ENCODE measurements at regions of chr4 and their contacts with region 1.

Region 1: DNA sequence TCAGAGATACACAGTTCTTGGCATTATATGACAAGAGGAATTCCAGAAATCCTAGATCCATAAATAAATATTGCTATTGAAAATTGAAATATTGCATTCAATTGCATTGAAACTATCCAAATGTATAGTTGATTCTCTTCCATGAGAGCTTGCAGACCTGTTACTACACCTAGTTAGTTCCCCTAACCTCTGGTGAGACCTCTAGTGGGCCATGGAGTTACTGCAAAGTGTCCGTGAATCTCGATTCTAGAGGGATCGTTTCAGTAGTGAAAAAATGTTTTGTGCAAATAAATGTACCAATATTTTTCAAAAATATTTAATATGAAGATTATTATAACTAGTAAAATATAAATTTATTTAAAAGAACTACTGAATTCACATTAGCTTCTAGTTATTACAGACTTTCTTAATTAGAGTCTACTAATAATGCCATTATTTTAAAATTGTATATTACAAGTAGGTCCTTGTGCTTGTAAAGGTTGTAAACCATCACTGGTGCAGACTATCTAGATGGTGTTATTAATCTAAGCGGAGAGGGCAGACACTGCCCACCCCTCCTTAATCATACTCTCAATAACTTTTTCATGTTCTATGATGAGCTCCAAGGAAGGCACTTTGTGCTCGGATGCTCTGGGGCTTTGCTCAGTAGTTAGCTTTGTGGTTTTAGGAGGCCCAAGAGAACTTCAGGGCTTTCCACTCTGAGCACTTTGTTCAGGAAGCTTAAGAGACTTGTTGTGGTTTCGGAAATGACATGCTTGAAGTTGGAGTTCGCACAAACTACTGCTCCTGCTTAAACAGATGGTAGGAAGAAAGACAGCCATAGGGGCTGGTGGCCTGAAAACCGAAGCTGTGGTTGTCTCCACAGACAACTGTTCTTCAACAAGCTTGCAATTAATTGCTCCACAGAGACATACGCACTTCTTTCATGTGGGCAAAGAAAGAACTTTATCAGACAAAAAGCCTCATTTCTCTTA is 42.8 kb downstream of the IL21 start:
- DNase-seq: peak; percentile 84
- ATAC-seq: peak; percentile 64
- H3K4me3 Mint-ChIP-seq: peak overlapping the region; percentile 68
- H3K27ac Mint-ChIP-seq: peak overlapping the region; percentile 96
- H3K4me1 Mint-ChIP-seq: peaks cover 64% of the 10 kb centered on the region
- H3K27me3 Mint-ChIP-seq: no peaks in the 10 kb centered on the region

Region 2: GRCh38 chr4:121950212-121950679 is 627.8 kb before region 1 on chr4:
- CTCF ChIA-PET with region 1: interaction called, 8 read pairs
- POLR2A ChIA-PET with region 1: no interaction called
- intact Hi-C with region 1: loop called (anchors 1 to 2 kb)
- DNase-seq: peak; percentile 94
- ATAC-seq: peak; percentile 87
- H3K4me3 Mint-ChIP-seq: peak overlapping the region; percentile 77
- H3K27ac Mint-ChIP-seq: no peak overlapping the region
- H3K4me1 Mint-ChIP-seq: peaks cover 4% of the 10 kb centered on the region
- H3K27me3 Mint-ChIP-seq: peaks cover 44% of the 10 kb centered on the region

Region 3: DNA sequence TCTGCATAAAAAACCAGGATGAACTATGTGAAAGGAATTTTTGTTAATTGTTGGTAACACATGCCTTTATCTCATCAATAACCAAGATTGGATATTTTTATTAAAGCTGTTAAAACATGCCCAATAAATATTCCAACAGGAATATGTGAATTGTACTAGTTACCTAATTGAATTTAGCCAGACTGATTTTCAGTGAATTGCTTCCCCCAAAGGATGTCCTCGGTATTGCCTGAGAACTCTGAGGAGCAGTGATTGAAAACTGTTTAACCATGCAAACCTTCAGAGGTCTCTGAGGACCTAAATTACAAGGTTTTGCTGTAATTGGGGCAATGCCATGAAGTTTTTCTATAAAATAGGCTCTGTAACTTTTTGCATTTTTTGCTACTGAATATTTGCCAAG is 359.3 kb before region 1 on chr4:
- CTCF ChIA-PET with region 1: no interaction called
- POLR2A ChIA-PET with region 1: no interaction called
- intact Hi-C with region 1: no loop called
- DNase-seq: no peak
- ATAC-seq: no peak
- H3K4me3 Mint-ChIP-seq: no peak overlapping the region
- H3K27ac Mint-ChIP-seq: no peak overlapping the region
- H3K4me1 Mint-ChIP-seq: peaks cover 19% of the 10 kb centered on the region
- H3K27me3 Mint-ChIP-seq: no peaks in the 10 kb centered on the region

Region 4: DNA sequence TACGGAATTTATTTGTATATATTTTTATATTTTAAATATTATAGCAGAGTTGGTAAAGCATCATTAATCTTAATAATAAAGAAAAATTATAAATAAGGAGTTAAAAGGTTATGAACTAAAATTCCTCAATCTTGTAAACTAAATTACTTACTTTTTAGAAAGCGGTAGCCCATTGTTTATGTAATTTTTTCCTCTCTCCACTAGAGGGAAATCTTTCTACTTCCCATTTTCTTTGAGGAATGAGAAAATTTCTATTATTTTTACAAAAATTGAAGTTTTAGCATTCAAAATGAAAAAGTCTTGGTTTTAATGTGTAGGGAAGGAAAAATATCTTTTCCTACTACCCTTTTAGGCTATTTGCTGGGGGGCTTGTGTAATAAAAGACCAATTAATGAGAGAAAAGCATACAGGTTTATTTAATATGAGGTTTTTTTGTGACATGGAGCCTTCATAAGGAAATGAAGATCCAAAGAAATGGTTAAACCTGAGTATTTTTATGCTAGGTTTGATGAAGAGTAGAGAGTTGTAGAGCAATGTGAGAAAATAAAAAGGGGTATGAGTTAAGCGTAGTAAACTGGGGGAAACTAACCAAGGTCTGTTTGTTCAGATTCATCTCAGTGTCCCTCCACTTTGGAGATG is 268.0 kb before region 1 on chr4:
- CTCF ChIA-PET with region 1: interaction called, 42 read pairs
- POLR2A ChIA-PET with region 1: no interaction called
- intact Hi-C with region 1: loop called (anchors 1 kb)
- DNase-seq: no peak
- ATAC-seq: no peak
- H3K4me3 Mint-ChIP-seq: no peak overlapping the region
- H3K27ac Mint-ChIP-seq: peak overlapping the region; percentile 51
- H3K4me1 Mint-ChIP-seq: peaks cover 2% of the 10 kb centered on the region
- H3K27me3 Mint-ChIP-seq: no peaks in the 10 kb centered on the region

Region 5: GRCh38 chr4:122508083-122508482 is 70.0 kb before region 1 on chr4:
- CTCF ChIA-PET with region 1: interaction called, 10 read pairs
- POLR2A ChIA-PET with region 1: interaction called, 8 read pairs
- intact Hi-C with region 1: loop called (anchors 1 to 2 kb)
- DNase-seq: no peak
- ATAC-seq: peak; percentile 77
- H3K4me3 Mint-ChIP-seq: peak overlapping the region; percentile 64
- H3K27ac Mint-ChIP-seq: peak overlapping the region; percentile 92
- H3K4me1 Mint-ChIP-seq: peaks cover 84% of the 10 kb centered on the region
- H3K27me3 Mint-ChIP-seq: peaks cover 2% of the 10 kb centered on the region

Region 6: GRCh38 chr4:122602277-122603142 is 24.4 kb after region 1 on chr4:
- CTCF ChIA-PET with region 1: interaction called, 30 read pairs
- POLR2A ChIA-PET with region 1: no interaction called
- intact Hi-C with region 1: no loop called
- DNase-seq: peak; percentile 40
- ATAC-seq: peak; percentile 89
- H3K4me3 Mint-ChIP-seq: peak overlapping the region; percentile 54
- H3K27ac Mint-ChIP-seq: peak overlapping the region; percentile 59
- H3K4me1 Mint-ChIP-seq: peaks cover 30% of the 10 kb centered on the region
- H3K27me3 Mint-ChIP-seq: peaks cover 3% of the 10 kb centered on the region

Region 7: DNA sequence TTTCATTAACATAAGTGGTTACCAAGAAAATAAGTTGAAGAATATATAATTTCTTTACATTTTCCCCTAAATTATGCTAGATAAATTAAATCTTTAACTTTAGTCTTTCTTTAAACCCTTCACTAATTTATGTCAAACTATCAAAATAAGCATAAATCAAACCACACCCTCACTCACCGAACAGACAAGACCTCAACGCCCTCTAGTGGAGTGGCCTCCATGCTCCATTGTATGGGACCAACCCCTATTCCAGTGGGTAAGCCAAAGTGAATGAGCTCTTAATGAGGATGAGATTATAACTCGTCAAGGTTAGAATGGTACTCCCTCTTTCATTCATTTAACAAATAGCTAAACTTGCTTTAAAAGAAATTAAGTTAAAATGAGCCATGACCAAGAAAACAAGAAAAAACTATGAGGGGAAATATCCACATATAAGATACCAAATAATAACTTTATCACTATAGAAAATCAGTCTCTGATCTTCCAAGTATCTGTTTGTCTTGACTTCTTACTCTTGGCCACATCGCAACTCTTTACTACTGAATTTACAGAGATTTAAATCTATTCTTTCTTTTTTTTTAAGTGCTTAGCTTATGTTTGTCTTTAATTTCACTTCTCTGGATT is 138.8 kb after region 1 on chr4:
- CTCF ChIA-PET with region 1: interaction called, 20 read pairs
- POLR2A ChIA-PET with region 1: no interaction called
- intact Hi-C with region 1: no loop called
- DNase-seq: peak; percentile 89
- ATAC-seq: peak; percentile 90
- H3K4me3 Mint-ChIP-seq: peak overlapping the region; percentile 26
- H3K27ac Mint-ChIP-seq: peak overlapping the region; percentile 72
- H3K4me1 Mint-ChIP-seq: peaks cover 43% of the 10 kb centered on the region
- H3K27me3 Mint-ChIP-seq: peaks cover 2% of the 10 kb centered on the region

Region 8: GRCh38 chr4:122922877-122923511 is 344.9 kb after region 1 on chr4:
- CTCF ChIA-PET with region 1: interaction called, 7 read pairs
- POLR2A ChIA-PET with region 1: no interaction called
- intact Hi-C with region 1: loop called in 1 of 2 experiments (anchors 2 kb)
- DNase-seq: peak; percentile 93
- ATAC-seq: peak; percentile 98
- H3K4me3 Mint-ChIP-seq: no peak overlapping the region
- H3K27ac Mint-ChIP-seq: peak overlapping the region; percentile 87
- H3K4me1 Mint-ChIP-seq: peaks cover 9% of the 10 kb centered on the region
- H3K27me3 Mint-ChIP-seq: no peaks in the 10 kb centered on the region

Measured in activated CD4-positive, alpha-beta T cell treated with anti-CD3 and anti-CD28 coated beads for 36 hours (primary cell).